HepG2 (cell line): ENCODE measurements at regions of chr5 and their contacts with region 1.

Region 1: DNA sequence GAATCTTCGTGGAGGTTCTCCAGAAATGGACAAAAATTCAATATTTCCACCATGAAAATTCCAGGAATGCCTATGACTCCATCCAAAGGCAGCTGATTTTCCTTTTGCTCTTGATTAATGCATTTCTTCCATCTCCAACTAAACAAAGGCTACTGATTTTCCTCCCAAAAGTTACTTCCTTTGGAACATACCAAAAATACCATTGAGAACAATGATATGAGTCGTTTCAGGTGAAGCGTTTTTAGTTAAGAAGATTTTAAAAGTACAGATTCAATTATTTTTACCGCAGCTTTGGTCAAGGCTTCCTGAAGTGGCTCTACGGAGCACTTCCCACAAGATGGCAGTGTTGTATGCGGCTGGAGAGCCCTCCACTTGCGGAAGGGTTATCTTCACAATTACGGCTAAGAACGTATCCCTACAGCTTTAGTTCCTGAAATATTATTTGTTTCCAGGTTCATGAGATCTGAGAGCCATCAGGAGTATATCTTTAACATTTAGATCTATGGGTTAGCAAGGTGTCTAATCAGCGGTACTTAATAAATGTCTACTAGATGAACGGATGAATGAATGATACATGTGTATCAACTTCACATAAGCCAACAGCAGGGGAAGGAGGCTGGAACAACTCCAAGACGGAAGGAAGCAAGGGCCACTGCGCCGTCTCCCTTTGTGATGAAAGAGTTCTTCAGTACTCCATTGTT is 35.9 kb upstream of the ARSB start:
- DNase-seq: peak; percentile 27
- ATAC-seq: peak; percentile 61
- H3K4me3 ChIP-seq: no peak overlapping the region
- H3K27ac ChIP-seq: no peak overlapping the region
- H3K4me1 ChIP-seq: peaks cover 33% of the 10 kb centered on the region
- H3K27me3 ChIP-seq: no peaks in the 10 kb centered on the region
- CTCF ChIP-seq: peak; percentile 83
- EP300 ChIP-seq: no peak
- POLR2A ChIP-seq: no peak
- RAD21 ChIP-seq: peak; percentile 89

Region 2: GRCh38 chr5:78671609-78672008 is 349.4 kb before region 1 on chr5:
- CTCF ChIA-PET with region 1: no interaction called
- POLR2A ChIA-PET with region 1: no interaction called
- in situ Hi-C with region 1: no loop called
- intact Hi-C with region 1: no loop called
- DNase-seq: peak; percentile 15
- ATAC-seq: peak; percentile 50; the same call in 2 of the 3 replicates
- H3K4me3 ChIP-seq: no peak overlapping the region
- H3K27ac ChIP-seq: no peak overlapping the region
- H3K4me1 ChIP-seq: peaks cover 37% of the 10 kb centered on the region
- H3K27me3 ChIP-seq: no peaks in the 10 kb centered on the region
- CTCF ChIP-seq: no peak
- EP300 ChIP-seq: no peak
- POLR2A ChIP-seq: no peak
- RAD21 ChIP-seq: no peak

Region 3: GRCh38 chr5:78899922-78900362 is 121.1 kb before region 1 on chr5:
- CTCF ChIA-PET with region 1: interaction called, 3 read pairs
- POLR2A ChIA-PET with region 1: no interaction called
- in situ Hi-C with region 1: no loop called
- intact Hi-C with region 1: loop called (anchors 5 kb)
- DNase-seq: peak; percentile 58
- ATAC-seq: peak; percentile 86
- H3K4me3 ChIP-seq: no peak overlapping the region
- H3K27ac ChIP-seq: no peak overlapping the region
- H3K4me1 ChIP-seq: no peaks in the 10 kb centered on the region
- H3K27me3 ChIP-seq: no peaks in the 10 kb centered on the region
- CTCF ChIP-seq: peak; percentile 72
- EP300 ChIP-seq: no peak
- POLR2A ChIP-seq: no peak
- RAD21 ChIP-seq: peak; percentile 72

Region 4: GRCh38 chr5:79109527-79110492 is 88.8 kb after region 1 on chr5:
- CTCF ChIA-PET with region 1: interaction called, 17 read pairs
- POLR2A ChIA-PET with region 1: no interaction called
- in situ Hi-C with region 1: no loop called
- intact Hi-C with region 1: loop called (anchors 1 kb)
- DNase-seq: peak; percentile 28
- ATAC-seq: no peak
- H3K4me3 ChIP-seq: peak overlapping the region in 1 of 3 experiments; percentile 51; a peak in 1 of 6 replicates
- H3K27ac ChIP-seq: no peak overlapping the region
- H3K4me1 ChIP-seq: peaks cover 76% of the 10 kb centered on the region
- H3K27me3 ChIP-seq: peaks cover 0 to 15% of the 10 kb centered on the region in 2 experiments; a peak in 4 of 5 replicates
- CTCF ChIP-seq: peak; percentile 66
- EP300 ChIP-seq: no peak
- POLR2A ChIP-seq: no peak
- RAD21 ChIP-seq: peak; percentile 58; the same call in 1 of the 2 replicates

Region 5: DNA sequence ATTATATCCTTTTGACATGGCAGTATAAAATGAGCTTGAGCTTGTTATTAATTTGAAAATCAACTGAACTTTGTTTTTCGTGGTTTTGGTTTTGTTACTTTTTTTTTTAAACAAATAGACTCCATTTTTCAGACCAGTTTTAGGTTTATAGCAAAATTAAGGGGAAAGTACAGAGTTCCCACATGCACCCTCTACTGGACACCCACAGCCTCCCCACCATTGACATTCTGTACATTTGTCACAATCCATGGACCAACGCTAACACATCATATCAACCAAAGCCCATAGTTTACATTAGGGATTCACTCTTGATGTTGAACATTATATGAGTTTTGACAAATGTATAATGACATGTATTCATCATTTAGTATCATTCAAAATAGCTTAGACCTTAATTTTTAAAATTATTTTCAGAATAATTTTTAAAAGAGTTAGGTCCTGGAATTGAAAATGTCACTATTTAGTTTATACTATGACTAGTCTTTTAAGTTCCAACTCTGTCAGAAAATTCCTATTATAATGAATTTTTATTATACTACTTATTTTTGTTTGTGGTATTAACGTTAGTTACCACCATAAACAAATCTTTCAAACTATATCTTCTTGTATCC is 179.7 kb after region 1 on chr5:
- CTCF ChIA-PET with region 1: interaction called, 10 read pairs
- POLR2A ChIA-PET with region 1: no interaction called
- in situ Hi-C with region 1: no loop called
- intact Hi-C with region 1: loop called (anchors 5 kb)
- DNase-seq: peak; percentile 10
- ATAC-seq: peak; percentile 90
- H3K4me3 ChIP-seq: no peak overlapping the region
- H3K27ac ChIP-seq: no peak overlapping the region
- H3K4me1 ChIP-seq: no peaks in the 10 kb centered on the region
- H3K27me3 ChIP-seq: no peaks in the 10 kb centered on the region
- CTCF ChIP-seq: peak; percentile 54
- EP300 ChIP-seq: no peak
- POLR2A ChIP-seq: no peak
- RAD21 ChIP-seq: no peak

Region 6: DNA sequence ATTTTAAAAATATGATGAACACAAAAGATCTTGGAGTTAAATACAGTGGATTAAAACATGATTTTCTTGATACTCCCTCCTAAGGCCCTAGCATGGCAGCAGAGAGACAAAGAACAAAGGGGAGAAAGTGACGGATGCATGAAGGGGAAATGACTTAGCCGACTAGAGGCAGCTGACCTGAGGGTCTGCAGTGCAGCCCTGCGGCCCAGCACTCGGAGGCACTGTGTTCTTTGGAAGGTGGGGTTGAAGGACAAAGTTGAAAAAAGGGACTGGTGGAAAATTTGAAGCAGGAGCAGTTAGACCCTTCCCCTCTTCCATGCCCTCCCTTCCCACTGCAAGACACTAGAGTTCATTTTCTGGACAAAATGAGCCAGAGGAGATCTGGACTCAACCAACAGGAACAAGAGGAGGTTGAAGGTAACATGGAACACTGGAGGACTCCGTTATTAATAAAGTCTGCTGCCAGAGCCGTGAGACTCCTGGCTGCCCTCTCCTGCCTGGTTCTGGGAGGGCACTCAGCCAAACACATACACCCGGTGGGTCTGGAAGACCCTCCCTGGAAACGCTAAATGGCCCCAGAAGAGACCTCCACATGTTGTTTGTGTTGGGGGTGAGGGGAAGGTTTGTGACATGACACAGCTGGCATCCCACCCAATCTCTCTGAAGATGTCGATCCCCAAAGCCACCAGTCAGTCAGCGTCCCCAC is 313.0 kb after region 1 on chr5:
- CTCF ChIA-PET with region 1: no interaction called
- POLR2A ChIA-PET with region 1: no interaction called
- in situ Hi-C with region 1: no loop called
- intact Hi-C with region 1: loop called (anchors 10 kb)
- DNase-seq: peak; percentile 10
- ATAC-seq: peak; percentile 95
- H3K4me3 ChIP-seq: peak overlapping the region in 1 of 3 experiments; percentile 26; a peak in 2 of 6 replicates
- H3K27ac ChIP-seq: no peak overlapping the region
- H3K4me1 ChIP-seq: peaks cover 8% of the 10 kb centered on the region
- H3K27me3 ChIP-seq: no peaks in the 10 kb centered on the region
- CTCF ChIP-seq: peak; percentile 43
- EP300 ChIP-seq: no peak
- POLR2A ChIP-seq: no peak
- RAD21 ChIP-seq: 0 out of 2 replicates have a peak, but pooled peaks have one; percentile 20

Region 7: GRCh38 chr5:80008995-80009765 is 988.2 kb after region 1 on chr5:
- CTCF ChIA-PET with region 1: no interaction called
- POLR2A ChIA-PET with region 1: no interaction called
- in situ Hi-C with region 1: no loop called
- intact Hi-C with region 1: no loop called
- DNase-seq: no peak
- ATAC-seq: no peak
- H3K4me3 ChIP-seq: no peak overlapping the region
- H3K27ac ChIP-seq: no peak overlapping the region
- H3K4me1 ChIP-seq: no peaks in the 10 kb centered on the region
- H3K27me3 ChIP-seq: no peaks in the 10 kb centered on the region
- CTCF ChIP-seq: no peak
- EP300 ChIP-seq: no peak
- POLR2A ChIP-seq: no peak
- RAD21 ChIP-seq: no peak